Mammary epithelial cell (primary cell): ENCODE measurements at regions of chr9 and their contacts with region 1.

Region 1: DNA sequence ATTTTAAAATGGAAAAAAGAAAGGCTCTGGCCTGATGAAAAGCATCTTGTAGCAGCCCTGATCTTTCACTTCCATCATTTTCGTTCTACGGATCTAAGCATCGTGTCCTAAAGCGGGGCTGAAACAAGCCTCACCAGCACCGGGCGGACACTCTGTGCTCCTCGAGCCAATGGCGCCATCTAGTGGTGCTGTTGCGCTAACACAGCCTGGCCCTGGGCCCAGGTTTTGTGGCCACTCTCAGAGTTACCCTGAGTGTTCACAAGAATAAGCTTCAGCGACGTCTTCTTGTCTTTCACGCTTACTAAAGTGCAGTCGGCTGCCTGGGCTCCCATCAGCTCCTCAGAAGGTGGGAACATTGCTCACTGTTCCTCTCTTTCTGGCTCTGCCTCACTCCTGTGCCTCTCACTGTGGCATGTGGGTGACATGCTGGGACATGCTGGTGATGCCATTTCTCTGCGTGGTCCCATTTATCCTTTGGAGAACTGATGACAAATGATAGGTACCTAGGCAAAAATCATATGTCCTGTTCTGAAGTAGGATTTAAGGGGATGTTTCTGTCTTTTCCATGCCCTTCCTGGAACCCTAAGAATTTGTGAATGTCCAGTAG is 32.7 kb downstream of the DMRT3 start:
- DNase-seq: peak; percentile 69
- H3K4me3 ChIP-seq: no peak overlapping the region
- H3K27ac ChIP-seq: no peak overlapping the region
- H3K4me1 ChIP-seq: peaks cover 6% of the 10 kb centered on the region
- H3K27me3 ChIP-seq: no peaks in the 10 kb centered on the region
- CTCF ChIP-seq: peak; percentile 98 to 99

Region 2: GRCh38 chr9:292914-293313 is 716.3 kb before region 1 on chr9:
- CTCF ChIA-PET with region 1: interaction called, 18 read pairs
- dilution Hi-C with region 1: no loop called
- in situ Hi-C with region 1: no loop called
- intact Hi-C with region 1: no loop called
- DNase-seq: no peak
- H3K4me3 ChIP-seq: no peak overlapping the region
- H3K27ac ChIP-seq: no peak overlapping the region
- H3K4me1 ChIP-seq: peaks cover 8% of the 10 kb centered on the region
- H3K27me3 ChIP-seq: peaks cover 6% of the 10 kb centered on the region
- CTCF ChIP-seq: peak in 1 of 2 donors; percentile 12

Region 3: GRCh38 chr9:385818-386398 is 623.3 kb before region 1 on chr9:
- CTCF ChIA-PET with region 1: no interaction called
- dilution Hi-C with region 1: no loop called
- in situ Hi-C with region 1: no loop called
- intact Hi-C with region 1: loop called (anchors 2 kb)
- DNase-seq: peak; percentile 53
- H3K4me3 ChIP-seq: no peak overlapping the region
- H3K27ac ChIP-seq: no peak overlapping the region
- H3K4me1 ChIP-seq: no peaks in the 10 kb centered on the region
- H3K27me3 ChIP-seq: no peaks in the 10 kb centered on the region
- CTCF ChIP-seq: peak; percentile 96 to 99

Region 4: GRCh38 chr9:806285-807156 is 202.7 kb before region 1 on chr9:
- CTCF ChIA-PET with region 1: interaction called, 7 read pairs
- dilution Hi-C with region 1: no loop called
- in situ Hi-C with region 1: no loop called
- intact Hi-C with region 1: loop called (anchors 5 kb)
- DNase-seq: peak; percentile 24
- H3K4me3 ChIP-seq: no peak overlapping the region
- H3K27ac ChIP-seq: no peak overlapping the region
- H3K4me1 ChIP-seq: peaks cover 10% of the 10 kb centered on the region
- H3K27me3 ChIP-seq: no peaks in the 10 kb centered on the region
- CTCF ChIP-seq: peak; percentile 73 to 76

Region 5: DNA sequence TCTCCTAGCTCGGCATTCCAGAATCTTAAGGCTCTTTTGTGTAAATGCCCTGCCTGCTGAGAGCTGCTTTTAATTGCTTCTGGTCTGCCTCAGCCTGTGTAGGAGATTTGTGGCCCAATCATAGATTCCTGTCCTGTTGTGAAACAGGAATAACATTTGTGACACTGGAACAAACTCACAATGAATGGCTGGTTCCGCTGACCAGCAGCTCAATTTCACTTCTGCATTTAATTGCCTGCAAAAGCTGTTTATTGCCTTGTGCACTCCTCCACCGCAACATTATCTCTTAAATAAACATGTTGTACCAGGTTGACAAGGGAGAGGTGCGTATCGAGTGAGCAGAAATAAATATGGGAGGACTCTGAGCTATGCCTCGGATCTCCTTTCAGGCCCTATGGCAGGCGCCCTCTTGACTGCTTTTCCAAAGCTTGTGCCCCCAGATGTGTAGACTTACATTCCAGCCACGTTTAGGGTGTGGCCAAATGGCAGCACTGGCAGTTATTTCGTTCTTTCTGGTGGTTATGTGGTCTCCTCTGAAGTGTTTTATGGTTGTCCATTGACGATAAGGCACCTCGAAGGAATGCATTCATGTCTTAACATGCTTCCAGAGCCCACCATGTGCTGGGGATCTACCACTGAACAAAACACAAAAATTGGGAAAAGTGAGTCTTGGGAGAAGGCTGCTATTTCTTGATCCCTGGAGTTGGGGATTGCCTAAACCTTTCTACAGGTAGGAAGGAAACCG is 109.6 kb before region 1 on chr9:
- CTCF ChIA-PET with region 1: interaction called, 3 read pairs
- dilution Hi-C with region 1: loop called (anchors 5 kb)
- in situ Hi-C with region 1: loop called (anchors 5 kb)
- intact Hi-C with region 1: no loop called
- DNase-seq: no peak
- H3K4me3 ChIP-seq: no peak overlapping the region
- H3K27ac ChIP-seq: no peak overlapping the region
- H3K4me1 ChIP-seq: no peaks in the 10 kb centered on the region
- H3K27me3 ChIP-seq: no peaks in the 10 kb centered on the region
- CTCF ChIP-seq: no peak

Region 6: DNA sequence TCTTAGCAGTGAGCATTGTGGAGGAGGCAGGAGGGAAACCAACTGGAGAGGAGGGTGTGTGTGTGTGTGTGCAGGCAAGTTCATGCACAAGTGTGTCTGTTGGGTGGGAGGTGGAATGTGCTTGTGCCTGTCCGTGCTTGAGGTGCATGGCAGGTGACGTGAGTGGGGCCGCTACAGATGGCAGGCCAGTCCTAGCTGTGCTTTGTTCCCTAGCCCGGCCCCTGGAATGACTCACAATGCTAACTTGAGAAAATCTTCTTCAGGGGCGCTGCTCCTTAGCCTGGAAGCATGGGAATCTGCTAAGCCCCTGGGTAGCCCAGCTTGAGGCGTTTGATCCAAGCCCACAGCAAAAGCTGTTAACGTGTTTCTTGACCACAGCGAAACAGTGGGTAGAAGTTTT is 15.9 kb after region 1 on chr9:
- CTCF ChIA-PET with region 1: no interaction called
- dilution Hi-C with region 1: no loop called
- in situ Hi-C with region 1: no loop called
- intact Hi-C with region 1: no loop called
- DNase-seq: peak; percentile 37
- H3K4me3 ChIP-seq: no peak overlapping the region
- H3K27ac ChIP-seq: no peak overlapping the region
- H3K4me1 ChIP-seq: no peaks in the 10 kb centered on the region
- H3K27me3 ChIP-seq: no peaks in the 10 kb centered on the region
- CTCF ChIP-seq: no peak